ENCODE measurements at regions of chr12 and their contacts with region 1.

Region 1: GRCh38 chr12:89461649-89462612 is 62.7 kb downstream of the GALNT4 start:
- DNase-seq: no peak
- H3K4me3 Mint-ChIP-seq: peak overlapping the region; percentile 65
- H3K27ac Mint-ChIP-seq: peak overlapping the region; percentile 59
- H3K4me1 Mint-ChIP-seq: peaks cover 62% of the 10 kb centered on the region
- H3K27me3 Mint-ChIP-seq: no peaks in the 10 kb centered on the region

Region 2: DNA sequence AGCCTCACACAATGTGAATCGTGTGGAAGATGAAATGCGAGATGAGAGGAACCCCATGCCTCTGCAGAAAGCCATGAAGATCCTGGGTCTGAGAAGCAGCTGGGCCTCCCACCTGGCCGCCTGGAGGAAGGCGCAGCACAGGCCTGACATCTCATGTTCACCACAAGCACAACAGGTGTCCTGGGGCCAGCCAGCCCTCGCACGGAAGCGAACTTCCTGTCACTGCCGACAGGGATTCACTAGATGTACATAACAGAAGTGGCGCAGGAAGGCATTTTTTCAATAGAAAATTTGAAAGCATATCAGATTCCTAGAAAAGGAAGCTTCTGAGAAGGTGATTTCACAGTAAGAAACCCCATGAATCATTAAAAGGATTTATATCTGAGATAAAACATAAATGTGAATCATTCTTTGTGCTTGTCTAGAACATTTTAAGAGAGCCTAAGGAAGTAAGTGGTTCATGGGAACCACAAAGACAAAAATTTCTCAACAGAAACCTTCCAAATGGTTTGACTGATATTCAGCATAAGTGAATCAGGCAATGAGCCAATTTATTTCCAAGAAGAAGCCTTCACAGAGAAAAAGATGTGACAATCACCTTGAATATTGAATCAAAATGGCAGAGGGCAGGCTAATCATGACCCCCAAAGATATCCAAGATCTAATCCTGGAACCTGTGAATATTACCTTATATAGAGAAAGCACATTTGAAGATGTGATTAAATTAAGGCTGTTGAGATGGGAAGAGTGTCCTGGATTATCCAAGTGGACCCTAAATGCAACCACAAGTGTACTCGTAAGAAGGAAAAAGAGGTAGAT is 421.6 kb before region 1 on chr12:
- CTCF ChIA-PET with region 1: interaction called, 16 read pairs
- POLR2A ChIA-PET with region 1: interaction called, 42 read pairs
- DNase-seq: peak; percentile 90
- H3K4me3 Mint-ChIP-seq: peak overlapping the region; percentile 35
- H3K27ac Mint-ChIP-seq: peak overlapping the region; percentile 96
- H3K4me1 Mint-ChIP-seq: peaks cover 58% of the 10 kb centered on the region
- H3K27me3 Mint-ChIP-seq: no peaks in the 10 kb centered on the region

Region 3: DNA sequence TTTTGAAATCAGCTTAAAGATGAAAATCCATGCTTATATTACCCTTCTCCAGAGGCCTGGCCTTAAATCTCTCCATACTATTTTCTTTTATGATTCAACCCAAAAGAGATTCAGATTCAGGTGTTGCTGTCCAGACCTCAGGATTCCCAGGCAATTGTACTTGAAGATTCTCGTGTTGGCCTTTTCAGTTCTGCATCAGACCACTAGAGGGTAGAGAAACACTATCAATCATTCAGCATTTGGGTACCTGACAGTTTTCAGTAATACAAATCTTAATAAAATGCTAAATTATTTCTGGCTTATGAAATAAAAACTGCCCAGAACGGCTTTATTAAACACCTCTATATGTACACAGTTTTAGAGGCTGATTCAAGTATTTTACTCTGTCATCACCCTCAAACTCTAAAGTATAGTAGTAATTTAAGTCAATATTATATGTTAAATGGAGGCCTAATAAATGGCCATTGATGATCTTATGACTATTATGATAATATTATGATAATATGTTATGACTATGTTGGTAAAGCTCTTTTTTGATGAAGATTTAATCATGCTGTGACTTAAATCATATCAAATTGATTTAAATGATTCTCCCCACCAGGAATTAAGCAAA is 410.8 kb before region 1 on chr12:
- CTCF ChIA-PET with region 1: interaction called, 28 read pairs
- POLR2A ChIA-PET with region 1: no interaction called
- DNase-seq: no peak
- H3K4me3 Mint-ChIP-seq: no peak overlapping the region
- H3K27ac Mint-ChIP-seq: no peak overlapping the region
- H3K4me1 Mint-ChIP-seq: peaks cover 25% of the 10 kb centered on the region
- H3K27me3 Mint-ChIP-seq: no peaks in the 10 kb centered on the region

Region 4: DNA sequence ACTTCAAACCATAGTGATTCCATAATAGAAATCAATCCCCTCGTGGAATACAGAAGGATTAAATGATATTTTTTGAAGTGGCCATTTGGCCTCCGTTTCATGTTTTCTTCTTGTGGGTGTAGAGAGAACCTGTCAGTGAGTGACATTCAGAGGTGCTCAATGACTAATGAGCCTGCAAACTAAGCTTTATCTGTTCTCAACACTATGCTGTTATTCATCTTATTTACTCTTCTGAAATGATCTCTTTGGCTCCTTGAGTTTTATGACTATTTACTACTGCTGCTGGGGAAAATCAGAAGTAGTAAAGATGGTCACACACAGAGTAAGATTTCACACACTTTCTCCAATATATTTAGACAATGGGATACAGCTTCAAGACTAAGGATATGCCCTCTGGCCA is 216.3 kb after region 1 on chr12:
- CTCF ChIA-PET with region 1: no interaction called
- POLR2A ChIA-PET with region 1: no interaction called
- DNase-seq: no peak
- H3K4me3 Mint-ChIP-seq: no peak overlapping the region
- H3K27ac Mint-ChIP-seq: no peak overlapping the region
- H3K4me1 Mint-ChIP-seq: peaks cover 15% of the 10 kb centered on the region
- H3K27me3 Mint-ChIP-seq: no peaks in the 10 kb centered on the region

Measured in activated CD4-positive, alpha-beta memory T cell treated with anti-CD3 and anti-CD28 coated beads, Interleukin-2, amount 10 ng/mL, durations not matched to agents 7 days and 5 days (primary cell).